Gastrocnemius medialis (tissue), 4 donors: ENCODE measurements at regions of chr2 and their contacts with region 1.

Region 1: GRCh38 chr2:10448208-10448645 is at the start of gene ODC1:
- DNase-seq: peak; percentile 88 to 94
- ATAC-seq: peak; percentile 69 to 77
- H3K4me3 ChIP-seq: peak within 1 kb of the TSS; percentile 67 to 90 (median 80)
- H3K27ac ChIP-seq: peak within 1 kb of the TSS; percentile 90 to 98 (median 95)
- H3K4me1 ChIP-seq: peaks cover 30 to 32% of the 10 kb centered on the region in 2 donors
- H3K27me3 ChIP-seq: no peaks in the 10 kb centered on the region
- CTCF ChIP-seq: no peak
- POLR2A ChIP-seq: peak; percentile 83 to 92
- total RNA-seq, gene ODC1: 134 to 339 (median 255) TPM

Region 2: DNA sequence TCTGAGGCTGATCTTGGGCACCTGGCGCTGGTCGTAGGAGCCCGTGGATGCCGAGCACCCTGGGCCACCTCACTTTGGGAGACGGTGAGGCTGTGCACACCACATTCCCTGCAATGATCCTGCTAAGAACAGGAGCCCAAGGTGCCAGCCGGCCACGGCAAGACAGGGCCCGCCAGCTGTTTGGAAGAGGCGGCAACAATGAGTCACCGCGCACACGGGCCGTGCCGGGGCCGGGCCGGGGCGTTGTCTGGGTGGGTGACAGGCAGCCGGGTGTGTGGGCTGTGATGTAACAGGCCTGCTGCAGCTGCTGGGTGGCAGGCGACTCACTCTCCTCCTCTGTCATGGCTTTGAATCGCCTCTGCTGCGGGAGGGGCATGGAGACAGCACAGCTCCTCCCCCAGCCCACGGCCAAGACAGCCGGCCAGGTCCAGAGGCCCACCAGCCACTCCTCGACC is 49.6 kb after region 1 on chr2:
- in situ Hi-C with region 1: no loop called
- intact Hi-C with region 1: loop called (anchors 2 kb)
- DNase-seq: peak; percentile 79 to 87
- ATAC-seq: peak; percentile 91 to 93
- H3K4me3 ChIP-seq: no peak overlapping the region
- H3K27ac ChIP-seq: peak overlapping the region; percentile 31 to 75 (median 69)
- H3K4me1 ChIP-seq: peaks cover 3 to 9% of the 10 kb centered on the region in 2 donors
- H3K27me3 ChIP-seq: no peaks in the 10 kb centered on the region
- CTCF ChIP-seq: no peak
- POLR2A ChIP-seq: no peak

Region 3: DNA sequence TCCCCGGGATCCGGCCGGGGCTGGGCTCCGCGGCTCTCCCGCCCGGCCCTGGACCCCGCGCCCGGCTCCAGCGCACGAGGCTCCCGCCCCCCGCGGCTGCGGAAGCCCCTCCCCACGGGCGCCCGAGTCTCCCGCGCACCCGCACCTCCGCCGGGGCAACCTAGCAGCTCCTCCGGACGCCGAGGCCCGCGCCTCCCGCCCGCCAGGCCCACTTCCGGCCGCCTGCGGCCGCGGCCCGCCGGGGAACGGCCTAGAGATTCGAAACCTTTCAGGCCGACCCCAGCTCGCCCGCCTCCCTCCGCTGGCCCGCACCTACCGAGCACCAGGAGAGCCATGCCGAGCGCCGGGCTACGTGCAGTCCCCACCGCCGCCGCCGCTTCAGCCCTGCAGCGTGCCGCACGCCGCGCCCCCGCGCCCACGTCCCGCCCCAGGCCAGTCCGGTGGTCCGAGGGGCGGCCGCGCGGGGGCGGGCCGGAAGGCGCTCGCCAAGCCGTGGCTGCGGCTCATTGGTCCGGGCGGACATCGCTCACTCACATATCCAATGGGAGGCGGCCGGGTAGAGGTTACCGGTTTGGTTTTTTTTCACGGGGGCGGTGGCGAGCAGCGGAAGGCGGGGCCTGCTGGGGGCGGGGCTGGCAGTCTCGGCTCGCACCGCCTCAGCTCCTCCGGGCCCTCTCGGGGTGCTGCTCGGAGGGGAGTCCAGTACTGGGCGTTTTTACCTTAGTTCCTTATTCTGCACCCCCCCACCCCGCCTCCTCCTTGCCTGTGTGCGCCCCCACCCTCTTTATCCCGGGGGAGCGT is 364.3 kb after region 1 on chr2 and contains the start of gene PDIA6:
- in situ Hi-C with region 1: no loop called
- intact Hi-C with region 1: loop called (anchors 1 kb)
- DNase-seq: peak; percentile 96 to 97
- ATAC-seq: peak; percentile 94 to 97
- H3K4me3 ChIP-seq: peak within 1 kb of the TSS; percentile 64 to 87 (median 75)
- H3K27ac ChIP-seq: peak within 1 kb of the TSS; percentile 77 to 94 (median 89)
- H3K4me1 ChIP-seq: peaks cover 20 to 25% of the 10 kb centered on the region in 2 donors
- H3K27me3 ChIP-seq: no peaks in the 10 kb centered on the region
- CTCF ChIP-seq: peak in 4 of 5 experiments; percentile 17 to 49 (median 38)
- POLR2A ChIP-seq: peak; percentile 86 to 87
- total RNA-seq, gene PDIA6: 32.0 to 72.4 (median 54.2) TPM